ENCODE measurements at regions of chr12 and their contacts with region 1.

Region 1: GRCh38 chr12:121334513-121335343 is 17.5 kb downstream of the ANAPC5 start:
- DNase-seq: peak; percentile 36
- H3K4me3 ChIP-seq: no peak overlapping the region
- CTCF ChIP-seq: peak; percentile 73

Region 2: GRCh38 chr12:120481022-120481767 is 853.5 kb before region 1 on chr12:
- CTCF ChIA-PET with region 1: no interaction called
- POLR2A ChIA-PET with region 1: no interaction called
- DNase-seq: no peak
- H3K4me3 ChIP-seq: no peak overlapping the region
- CTCF ChIP-seq: no peak

Region 3: DNA sequence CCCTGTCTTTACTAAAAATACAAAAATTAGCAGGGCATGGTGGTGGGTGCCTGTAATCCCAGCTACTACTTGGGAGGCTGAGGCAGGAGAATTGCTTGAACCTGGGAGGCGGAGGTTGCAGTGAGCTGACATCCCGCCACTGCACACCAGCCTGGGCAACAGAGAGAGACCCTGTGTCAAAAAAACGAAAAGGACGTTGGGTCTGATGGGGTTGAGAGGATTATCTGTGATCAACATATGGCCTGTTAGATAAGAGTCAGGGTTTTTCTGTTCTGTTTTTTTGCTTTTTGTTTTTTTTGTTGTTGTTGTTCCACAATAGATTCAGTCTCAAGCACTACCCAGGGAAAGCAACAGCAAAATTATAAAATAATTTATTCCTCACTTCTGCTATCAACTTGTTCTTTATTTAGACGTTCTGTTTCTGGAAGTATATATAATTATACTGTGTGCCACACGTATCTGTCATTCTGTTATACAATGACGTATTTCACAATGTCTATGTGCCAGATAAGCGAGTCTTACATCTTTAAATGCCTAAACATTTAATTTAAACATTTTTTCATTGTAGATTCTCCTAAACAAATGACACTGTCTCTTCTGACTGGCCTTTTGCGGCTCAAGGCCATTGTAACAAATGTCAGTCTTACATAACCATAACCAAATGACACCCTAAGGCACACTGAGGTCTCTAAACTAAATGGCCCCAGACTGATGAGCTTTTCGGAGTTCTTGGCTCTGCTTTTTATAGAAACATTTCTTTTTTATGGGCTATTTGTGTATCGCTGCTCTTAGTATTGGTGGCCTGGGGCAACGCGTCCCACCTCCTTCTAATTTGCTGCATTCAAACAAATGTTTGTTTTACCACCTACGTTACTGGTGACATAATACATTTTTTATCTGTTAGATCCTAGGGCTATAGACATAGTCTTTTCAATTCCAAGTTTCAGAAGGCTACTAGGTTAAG is 132.0 kb before region 1 on chr12:
- CTCF ChIA-PET with region 1: no interaction called
- POLR2A ChIA-PET with region 1: no interaction called
- DNase-seq: no peak
- H3K4me3 ChIP-seq: no peak overlapping the region
- CTCF ChIP-seq: no peak

Region 4: GRCh38 chr12:121214855-121215745 is 119.6 kb before region 1 on chr12:
- CTCF ChIA-PET with region 1: no interaction called
- POLR2A ChIA-PET with region 1: no interaction called
- DNase-seq: peak; percentile 42
- H3K4me3 ChIP-seq: no peak overlapping the region
- CTCF ChIP-seq: no peak

Region 5: DNA sequence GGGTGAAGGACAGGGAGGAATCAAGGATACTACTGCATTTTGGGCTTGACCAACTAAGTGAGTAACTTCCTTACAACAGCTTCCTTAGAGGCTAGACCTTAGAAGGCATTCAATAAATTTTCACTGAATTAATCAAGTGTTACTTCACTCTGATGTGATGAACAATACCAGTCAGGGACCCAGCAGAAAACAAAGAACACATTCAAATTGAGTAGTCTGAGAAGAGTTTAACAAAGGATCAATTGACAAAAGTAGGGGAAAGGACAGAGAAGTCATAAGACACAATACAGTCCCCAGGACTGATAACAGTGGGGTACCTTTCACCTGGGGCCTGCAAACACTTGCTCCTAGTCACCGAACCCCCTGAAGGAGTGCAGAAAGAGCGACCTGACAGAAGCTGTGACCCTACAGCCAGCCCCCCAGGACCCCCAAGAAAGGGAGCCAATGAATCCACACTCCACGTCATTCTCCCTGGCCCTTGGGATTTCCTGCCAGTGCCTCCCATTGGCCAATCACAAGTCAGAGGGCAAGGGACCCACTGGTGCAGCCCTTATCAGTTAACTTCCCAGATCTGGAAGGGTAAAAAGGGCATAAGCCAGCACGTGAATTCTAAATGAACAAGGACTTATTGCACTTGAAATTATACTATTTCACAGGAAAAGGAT is 10.6 kb after region 1 on chr12:
- CTCF ChIA-PET with region 1: interaction called, 117 read pairs
- POLR2A ChIA-PET with region 1: no interaction called
- DNase-seq: no peak
- H3K4me3 ChIP-seq: no peak overlapping the region
- CTCF ChIP-seq: no peak

Region 6: GRCh38 chr12:121399391-121400331 is 64.9 kb after region 1 on chr12 and contains the start of gene RNF34:
- CTCF ChIA-PET with region 1: interaction called, 30 read pairs
- POLR2A ChIA-PET with region 1: no interaction called
- DNase-seq: peak; percentile 67
- H3K4me3 ChIP-seq: peak within 1 kb of the TSS; percentile 90
- CTCF ChIP-seq: no peak

Region 7: DNA sequence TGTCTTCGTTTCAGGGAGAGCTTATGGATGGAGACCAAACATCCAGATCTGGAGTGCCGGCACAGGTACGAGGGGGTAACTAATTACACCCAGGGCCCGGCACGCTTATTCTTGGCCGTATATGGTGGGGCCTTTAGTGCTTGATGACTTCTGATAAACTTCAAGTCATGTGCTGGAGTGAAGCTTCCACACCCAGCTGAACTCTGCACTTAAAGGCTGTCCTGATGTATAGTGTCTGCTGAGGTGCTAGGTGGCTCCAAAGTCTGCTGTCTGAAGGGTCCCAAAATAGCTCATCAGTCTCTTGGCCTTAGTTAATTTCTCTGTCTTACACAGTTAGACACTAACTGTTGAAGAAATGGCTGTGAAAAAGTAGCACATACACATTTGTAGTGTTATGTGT is 83.1 kb after region 1 on chr12:
- CTCF ChIA-PET with region 1: interaction called, 51 read pairs
- POLR2A ChIA-PET with region 1: no interaction called
- DNase-seq: no peak
- H3K4me3 ChIP-seq: no peak overlapping the region
- CTCF ChIP-seq: no peak

Region 8: DNA sequence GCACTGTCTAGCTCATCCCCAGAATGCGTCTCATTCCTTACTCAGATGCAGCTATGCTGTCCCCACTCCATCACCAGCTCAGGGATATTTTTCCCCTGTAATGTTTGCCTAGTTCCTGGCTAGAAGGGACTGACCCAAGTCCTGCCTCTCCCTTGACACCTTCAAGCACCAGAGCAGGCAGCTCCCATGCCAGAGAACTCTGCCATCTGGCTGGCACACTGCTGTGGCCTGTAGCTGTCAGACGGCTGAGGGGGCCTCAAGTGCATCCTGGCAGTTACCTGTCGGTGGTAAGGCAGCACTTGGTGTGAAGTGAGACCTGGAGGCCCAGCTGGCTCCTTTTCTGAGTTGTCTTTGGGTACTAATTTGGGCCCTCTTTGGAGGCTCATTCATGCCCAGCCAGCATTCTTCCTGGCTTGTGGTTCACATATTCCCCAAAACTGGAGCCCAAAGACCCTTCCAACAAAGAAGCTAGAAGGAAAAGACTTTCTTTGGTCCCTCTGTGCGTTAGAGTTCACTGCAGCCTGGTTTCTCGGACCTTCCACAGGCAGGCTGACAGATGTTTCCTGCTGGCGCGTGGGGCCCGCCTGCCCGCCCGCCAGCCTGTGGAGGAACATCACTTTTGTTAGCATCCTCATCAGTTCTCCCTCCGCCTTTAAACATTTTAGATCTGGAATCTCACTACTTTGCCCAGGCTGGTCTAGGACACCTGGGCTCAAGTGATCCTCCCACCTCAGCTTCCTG is 98.2 kb after region 1 on chr12:
- CTCF ChIA-PET with region 1: interaction called, 371 read pairs
- POLR2A ChIA-PET with region 1: no interaction called
- DNase-seq: no peak
- H3K4me3 ChIP-seq: no peak overlapping the region
- CTCF ChIP-seq: no peak

Region 9: DNA sequence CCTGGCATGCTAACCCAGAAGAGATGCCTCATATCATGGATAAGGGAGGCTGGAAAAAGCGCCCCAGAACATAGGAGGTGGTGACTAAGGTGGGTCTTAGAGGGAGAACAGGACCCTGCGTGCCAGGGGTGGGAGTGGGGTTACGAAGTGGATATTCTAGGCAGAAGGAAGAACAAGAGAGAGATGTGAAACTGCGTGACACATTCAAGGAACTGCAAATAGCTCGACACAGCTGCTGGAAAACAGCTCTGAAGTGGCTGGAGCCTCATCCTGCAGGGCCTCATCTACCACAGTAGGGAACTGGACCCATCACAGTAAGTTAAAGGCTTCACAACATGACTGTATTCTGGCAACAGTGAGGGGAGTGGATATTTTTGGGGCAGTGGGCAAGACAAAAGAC is 126.3 kb after region 1 on chr12:
- CTCF ChIA-PET with region 1: interaction called, 17 read pairs
- POLR2A ChIA-PET with region 1: no interaction called
- DNase-seq: no peak
- H3K4me3 ChIP-seq: no peak overlapping the region
- CTCF ChIP-seq: no peak

Region 10: GRCh38 chr12:121560392-121561008 is 225.8 kb after region 1 on chr12:
- CTCF ChIA-PET with region 1: no interaction called
- POLR2A ChIA-PET with region 1: no interaction called
- DNase-seq: no peak
- H3K4me3 ChIP-seq: no peak overlapping the region
- CTCF ChIP-seq: no peak

Measured in AG04449 (cell line).